ENCODE measurements at regions of chr16 and their contacts with region 1.

Region 1: DNA sequence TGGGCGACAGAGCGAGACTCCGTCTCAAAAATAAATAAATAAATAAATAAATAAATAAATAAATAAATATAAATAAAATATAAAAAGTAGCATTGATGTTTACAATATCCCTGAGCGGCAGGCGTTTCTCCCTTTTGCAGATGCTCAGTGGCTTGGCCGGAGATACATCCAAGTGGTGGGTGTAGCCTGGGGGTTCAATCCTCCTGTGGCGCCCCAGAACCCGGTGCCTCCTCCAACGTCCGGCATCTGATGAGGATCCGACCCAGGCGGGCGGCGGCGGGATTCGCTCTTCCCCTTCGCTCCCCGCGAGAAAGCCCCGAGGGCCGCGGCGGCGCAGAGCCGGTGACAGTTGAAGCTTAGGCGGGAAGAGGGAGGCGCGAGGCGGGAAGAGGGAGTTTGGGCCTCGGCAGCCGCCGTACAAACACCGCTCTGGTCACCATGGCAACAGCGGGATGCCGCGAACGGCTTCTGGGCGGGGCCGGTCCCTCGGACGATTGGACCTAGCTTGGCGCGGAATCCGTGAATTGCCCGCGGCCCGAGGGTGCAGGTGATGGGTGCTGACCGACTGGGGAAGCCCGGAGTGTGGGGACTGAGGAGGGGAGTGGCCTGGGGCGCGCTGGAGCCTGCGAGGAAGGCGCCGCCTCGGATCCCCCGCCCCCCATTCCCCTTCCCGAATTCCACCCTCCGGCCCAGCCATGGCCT is 12.7 kb upstream of the ALDOA start:
- DNase-seq: peak; percentile 94
- H3K4me3 Mint-ChIP-seq: peak overlapping the region; percentile 89
- H3K27ac Mint-ChIP-seq: peak overlapping the region; percentile 85
- H3K4me1 Mint-ChIP-seq: peaks cover 43% of the 10 kb centered on the region
- H3K27me3 Mint-ChIP-seq: peaks cover 27% of the 10 kb centered on the region

Region 2: DNA sequence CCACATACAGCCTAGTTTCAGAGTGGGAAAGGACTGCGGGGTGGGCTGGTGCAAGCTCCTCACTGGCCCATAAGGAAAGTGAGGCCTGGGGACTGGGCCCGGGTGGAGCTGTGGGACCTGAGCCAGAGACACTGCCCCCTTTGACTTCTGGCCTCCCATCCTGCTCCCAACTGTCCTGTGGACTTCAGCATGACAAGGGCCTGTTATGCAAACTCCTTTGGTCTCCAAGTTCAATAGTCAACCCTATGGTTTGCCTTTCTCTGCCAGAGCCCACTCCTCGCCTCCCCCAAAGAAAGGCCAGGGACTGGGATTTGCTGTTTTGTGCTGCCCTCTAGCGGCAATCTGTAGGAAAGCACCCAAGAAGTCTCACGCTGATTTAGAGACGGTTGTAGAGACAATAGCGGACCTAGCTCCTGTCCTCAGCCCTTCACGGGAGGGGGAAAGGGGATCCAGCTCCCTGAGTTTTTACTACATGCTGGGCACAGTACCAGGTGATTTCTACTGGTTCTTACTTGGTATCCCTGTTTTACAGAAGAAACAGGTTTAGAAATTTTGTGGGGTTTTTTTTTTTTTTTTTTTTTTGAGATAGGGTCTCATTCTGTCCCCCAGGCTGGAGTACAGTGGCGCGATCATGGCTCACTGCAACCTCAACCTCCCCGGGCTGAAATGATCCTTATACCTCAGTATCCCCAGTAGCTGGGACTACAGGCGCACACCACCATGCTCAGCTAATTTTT is 20.6 kb before region 1 on chr16:
- CTCF ChIA-PET with region 1: interaction called, 15 read pairs
- DNase-seq: peak; percentile 77
- H3K4me3 Mint-ChIP-seq: no peak overlapping the region
- H3K27ac Mint-ChIP-seq: no peak overlapping the region
- H3K4me1 Mint-ChIP-seq: peaks cover 8% of the 10 kb centered on the region
- H3K27me3 Mint-ChIP-seq: peaks cover 86% of the 10 kb centered on the region

Region 3: GRCh38 chr16:30065143-30065850 is 12.5 kb after region 1 on chr16 and contains the start of gene ALDOA:
- CTCF ChIA-PET with region 1: interaction called, 31 read pairs
- DNase-seq: peak; percentile 97
- H3K4me3 Mint-ChIP-seq: peak within 1 kb of the TSS; percentile 100
- H3K27ac Mint-ChIP-seq: peak within 1 kb of the TSS; percentile 98
- H3K4me1 Mint-ChIP-seq: peaks cover 45% of the 10 kb centered on the region
- H3K27me3 Mint-ChIP-seq: peaks cover 4% of the 10 kb centered on the region

Measured in activated naive CD4-positive, alpha-beta T cell treated with anti-CD3 and anti-CD28 coated beads, Interleukin-2, amount 10 ng/mL, durations not matched to agents 7 days and 5 days (primary cell).